HEK293T (cell line): ENCODE measurements at regions of chr1 and their contacts with region 1.

Region 1: GRCh38 chr1:153633716-153634665 is at the start of gene CHTOP:
- DNase-seq: peak; percentile 97

Region 2: GRCh38 chr1:153545067-153546055 is 88.6 kb before region 1 on chr1 and contains the start of gene S100A4:
- CTCF ChIA-PET with region 1: no interaction called
- POLR2A ChIA-PET with region 1: interaction called, 13 read pairs
- DNase-seq: peak; percentile 89

Region 3: DNA sequence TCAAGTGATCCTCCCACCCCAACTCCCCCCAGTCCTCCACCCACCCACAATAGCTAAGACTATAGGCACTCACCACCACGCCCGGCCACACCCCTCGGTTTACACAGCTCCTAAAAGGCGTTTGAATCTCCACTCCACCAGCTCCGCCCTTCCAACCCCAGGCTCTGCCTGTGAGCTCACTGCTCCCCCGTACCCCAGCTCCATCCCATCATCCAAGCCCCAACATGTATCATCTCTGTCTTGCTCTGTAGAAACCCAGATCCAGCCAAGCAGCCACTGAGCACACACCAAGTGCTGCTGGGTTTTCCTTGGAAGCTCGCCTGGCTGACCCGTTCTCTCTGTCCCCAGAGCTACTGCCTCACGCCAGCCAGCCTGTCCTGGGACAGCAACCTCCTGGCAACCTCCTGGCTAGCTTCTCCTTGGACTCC is 56.4 kb before region 1 on chr1:
- CTCF ChIA-PET with region 1: interaction called, 4 read pairs
- POLR2A ChIA-PET with region 1: interaction called, 20 read pairs
- DNase-seq: no peak

Region 4: DNA sequence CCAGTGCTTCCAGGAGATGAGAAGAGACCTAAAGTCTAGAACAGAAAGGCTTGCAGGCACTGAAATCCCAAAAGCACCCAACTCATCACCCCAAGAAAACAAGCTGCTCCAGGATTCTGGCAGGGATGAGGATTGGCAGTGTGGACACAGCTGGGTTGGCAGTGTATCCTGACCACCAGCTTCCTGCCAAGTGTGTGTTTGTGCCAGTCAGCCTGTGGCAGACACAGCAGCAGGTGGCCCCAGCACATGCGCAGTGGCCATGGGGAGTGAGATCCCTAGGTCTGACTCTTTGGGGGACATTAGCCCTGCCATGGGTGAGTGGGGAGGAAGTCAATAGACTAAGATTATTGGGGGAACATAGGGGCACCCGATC is 15.9 kb after region 1 on chr1:
- CTCF ChIA-PET with region 1: no interaction called
- POLR2A ChIA-PET with region 1: interaction called, 47 read pairs
- DNase-seq: no peak

Region 5: DNA sequence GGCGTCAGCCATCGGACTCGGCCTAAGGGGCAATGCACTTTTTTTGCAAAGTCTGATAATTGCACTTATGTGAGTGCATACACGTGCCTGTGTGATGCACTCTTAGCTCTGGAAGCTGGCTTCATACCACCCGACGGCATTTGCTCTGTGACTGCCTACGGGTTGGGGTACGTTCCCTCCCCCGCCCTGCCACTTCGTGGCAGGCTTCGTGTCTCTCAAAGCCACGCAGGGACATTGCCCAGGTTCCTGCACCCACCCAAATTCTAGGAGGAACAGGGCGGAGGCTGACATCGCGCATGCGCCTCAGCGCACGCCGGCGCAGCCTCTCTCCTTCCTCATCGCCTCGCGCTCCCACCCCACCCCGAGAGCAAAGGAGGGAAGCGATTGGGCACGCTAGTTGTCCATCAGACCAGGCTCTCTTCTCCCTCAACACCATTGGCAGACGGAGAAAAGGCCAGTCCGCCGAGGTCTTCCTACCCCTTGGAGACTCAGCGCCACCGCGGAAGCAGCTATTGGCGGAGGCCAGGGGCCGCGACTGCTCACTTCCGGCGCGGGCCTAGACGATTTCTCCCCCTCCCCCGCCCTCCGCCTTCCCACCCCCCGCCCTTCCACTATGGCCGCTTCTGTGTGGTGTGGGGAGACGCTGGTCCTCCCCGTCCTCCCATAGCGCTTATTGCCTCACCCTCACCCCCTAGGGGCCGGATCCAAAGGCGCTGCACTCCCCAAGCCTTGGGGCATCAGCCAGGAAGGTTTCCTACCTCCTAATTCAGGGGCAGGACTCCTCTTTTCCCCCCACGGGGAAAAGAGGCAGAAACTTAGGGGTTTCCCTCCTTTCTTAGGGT is 93.7 kb after region 1 on chr1 and contains the start of gene INTS3:
- CTCF ChIA-PET with region 1: no interaction called
- POLR2A ChIA-PET with region 1: interaction called, 10 read pairs
- DNase-seq: peak; percentile 100